Activated CD4-positive, alpha-beta T cell treated with anti-CD3 and anti-CD28 coated beads, Interleukin-2, amount 10 ng/mL, durations not matched to agents 24 days and 14 days (primary cell): ENCODE measurements at regions of chr3 and their contacts with region 1.

Region 1: GRCh38 chr3:45322616-45323015 is 65.8 kb upstream of the LARS2 start:
- DNase-seq: no peak
- H3K4me3 Mint-ChIP-seq: no peak overlapping the region
- H3K27ac Mint-ChIP-seq: no peak overlapping the region
- H3K4me1 Mint-ChIP-seq: no peaks in the 10 kb centered on the region
- H3K27me3 Mint-ChIP-seq: peaks cover 27% of the 10 kb centered on the region

Region 2: GRCh38 chr3:45078910-45079522 is 243.6 kb before region 1 on chr3:
- intact Hi-C with region 1: no loop called
- DNase-seq: peak; percentile 60
- H3K4me3 Mint-ChIP-seq: no peak overlapping the region
- H3K27ac Mint-ChIP-seq: no peak overlapping the region
- H3K4me1 Mint-ChIP-seq: peaks cover 4% of the 10 kb centered on the region
- H3K27me3 Mint-ChIP-seq: peaks cover 36% of the 10 kb centered on the region

Region 3: DNA sequence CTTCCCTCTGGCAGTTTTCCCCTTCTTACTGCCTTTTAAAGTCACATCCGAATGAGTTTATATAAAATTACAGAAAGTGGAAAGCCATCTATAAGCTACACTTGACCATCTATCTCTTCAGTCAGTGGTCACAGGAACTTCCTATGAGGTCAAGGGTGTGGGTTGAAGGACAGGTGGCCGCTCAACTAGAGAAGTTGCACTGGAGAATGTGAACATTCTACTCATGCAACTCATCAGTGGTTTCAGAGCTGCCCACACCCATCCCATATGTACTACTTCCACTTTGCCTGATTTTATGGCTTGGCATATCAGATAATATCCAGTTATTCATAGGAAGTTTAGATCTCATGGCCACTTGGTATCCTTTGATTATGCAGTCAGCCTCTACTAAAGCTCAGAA is 39.1 kb before region 1 on chr3:
- intact Hi-C with region 1: loop called (anchors 1 kb)
- DNase-seq: no peak
- H3K4me3 Mint-ChIP-seq: no peak overlapping the region
- H3K27ac Mint-ChIP-seq: no peak overlapping the region
- H3K4me1 Mint-ChIP-seq: no peaks in the 10 kb centered on the region
- H3K27me3 Mint-ChIP-seq: peaks cover 39% of the 10 kb centered on the region